Left cardiac atrium (tissue), 4 donors: ENCODE measurements at regions of chr19 and their contacts with region 1.

Region 1: DNA sequence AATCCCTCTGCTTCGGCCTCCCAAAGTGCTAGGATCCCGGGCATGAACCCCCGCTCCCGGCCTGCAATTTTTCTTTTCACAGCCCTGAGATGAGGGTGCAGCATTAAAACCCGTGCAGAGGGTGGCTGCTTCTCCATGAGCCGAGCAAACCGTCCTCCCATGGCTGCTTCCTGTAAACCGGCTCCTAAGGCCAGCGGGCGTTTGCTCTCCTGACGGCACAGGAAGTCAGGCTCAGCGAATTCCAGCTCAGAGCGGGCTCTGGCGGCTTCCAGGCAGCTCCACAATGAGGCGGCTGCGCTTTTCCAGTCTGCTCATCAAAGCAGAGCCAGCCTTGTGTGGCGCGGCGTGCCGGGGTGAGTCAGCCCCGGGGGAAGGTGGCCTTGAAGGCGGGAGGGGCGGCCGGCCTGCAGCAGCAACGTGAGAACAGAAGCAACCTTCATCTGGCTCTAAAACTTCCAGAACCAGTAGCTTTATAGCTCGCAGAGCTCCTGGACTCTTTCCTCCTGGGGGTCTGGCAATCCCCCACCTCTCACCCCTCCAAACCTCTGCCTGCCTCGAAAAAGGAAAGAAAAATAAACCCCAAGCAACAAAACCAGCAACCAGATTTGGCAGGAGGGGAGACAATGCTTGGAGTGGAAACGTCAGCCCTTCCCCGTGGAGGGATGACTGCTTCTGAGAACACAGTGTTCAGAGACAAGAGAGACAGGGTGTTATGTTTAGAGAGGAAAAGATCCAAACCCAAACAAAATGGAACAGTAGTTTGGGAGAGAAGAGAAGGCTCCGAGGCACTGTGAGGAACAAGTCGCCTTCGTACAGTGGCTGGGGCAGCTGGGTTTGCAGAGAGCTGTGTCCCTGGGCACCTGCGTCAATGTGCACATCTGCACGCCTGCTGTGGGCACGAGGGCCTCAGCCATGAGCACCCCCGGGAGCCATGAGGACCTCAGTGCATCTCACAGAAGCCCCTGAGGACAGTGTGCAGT is 67.8 kb downstream of the GADD45B start:
- DNase-seq: peak; percentile 97
- ATAC-seq: peak; percentile 81 to 90

Region 2: GRCh38 chr19:2475702-2476450 is 67.9 kb before region 1 on chr19 and contains the start of gene GADD45B:
- intact Hi-C with region 1: loop called (anchors 2 to 5 kb)
- DNase-seq: peak; percentile 98
- ATAC-seq: peak; percentile 81 to 84
- total RNA-seq, gene GADD45B: 64.0 to 189 TPM

Region 3: DNA sequence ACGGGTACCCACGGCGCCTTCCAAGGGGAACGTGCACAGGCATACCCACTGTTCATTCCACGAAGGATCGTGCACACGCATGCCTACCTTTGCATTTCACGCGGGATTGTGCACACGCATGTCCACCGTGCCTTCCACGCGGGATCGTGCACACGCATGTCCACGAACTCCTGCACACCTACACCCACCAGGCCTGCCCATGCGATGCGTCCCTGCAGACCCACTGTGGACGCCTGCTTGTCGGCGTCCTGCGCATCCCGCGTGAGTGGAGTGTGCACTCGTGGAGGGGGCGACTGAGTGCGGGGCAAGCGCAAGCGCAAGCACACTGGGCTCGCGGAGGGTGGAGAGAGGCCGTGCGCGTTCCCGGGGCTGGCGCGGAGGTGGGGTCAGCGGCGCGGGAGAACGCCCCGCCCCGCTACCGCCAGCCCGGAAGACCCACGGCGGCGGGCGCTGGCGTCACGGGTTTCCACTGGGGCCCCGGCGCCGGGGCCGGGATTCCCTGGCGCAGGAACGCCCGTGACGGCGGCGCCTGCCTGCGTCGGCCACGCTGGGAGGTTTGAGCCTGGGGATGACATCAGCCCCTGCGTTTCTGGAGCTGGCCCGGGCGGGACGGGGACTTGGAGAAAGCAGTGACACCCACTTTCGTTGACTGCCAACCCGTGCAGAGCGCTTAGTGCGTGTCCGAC is 49.2 kb before region 1 on chr19:
- intact Hi-C with region 1: loop called (anchors 5 kb)
- DNase-seq: peak; percentile 91
- ATAC-seq: peak; percentile 84 to 86

Region 4: DNA sequence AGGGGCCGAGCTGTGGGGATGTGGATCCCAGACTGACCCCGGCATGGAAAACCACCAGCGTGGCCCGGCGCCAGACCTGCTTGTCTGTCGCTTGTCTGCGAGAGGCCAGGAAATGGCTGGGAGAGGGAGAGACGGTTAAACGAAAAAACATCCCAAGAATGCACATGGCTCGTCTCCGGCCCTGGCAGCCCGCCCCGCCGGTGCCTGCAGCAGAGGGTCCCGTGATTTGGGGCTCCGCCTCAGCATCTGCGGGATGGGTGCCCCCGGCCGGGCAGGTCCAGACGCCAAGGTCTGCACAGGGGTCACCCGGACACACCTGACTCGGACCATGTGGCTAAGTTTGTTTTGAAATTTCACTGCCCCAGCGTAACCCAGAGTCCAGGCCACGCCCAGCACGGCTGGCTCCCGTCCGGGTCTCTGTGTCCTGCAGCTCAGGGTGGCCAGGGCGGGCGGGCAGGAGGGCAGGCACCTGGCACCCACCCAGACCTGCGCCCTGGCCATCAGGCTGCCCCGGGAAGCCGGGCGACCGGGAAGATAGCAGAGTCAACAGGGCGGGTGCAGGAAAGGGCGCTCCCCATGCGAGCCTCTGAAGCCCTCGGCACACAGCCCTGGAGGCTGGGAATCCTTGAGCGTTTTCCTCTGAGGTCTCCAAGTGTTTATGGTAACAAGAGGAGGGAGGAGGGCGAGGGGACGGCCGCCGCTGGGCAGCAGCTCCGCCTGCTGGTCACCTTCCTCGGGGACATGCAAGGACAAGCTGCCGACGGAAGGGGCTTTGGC is 35.3 kb after region 1 on chr19:
- intact Hi-C with region 1: loop called in 1 of 2 experiments (anchors 5 kb)
- DNase-seq: peak; percentile 89
- ATAC-seq: peak; percentile 87 to 89

Region 5: GRCh38 chr19:2602391-2603181 is 58.8 kb after region 1 on chr19:
- intact Hi-C with region 1: loop called in 1 of 2 experiments (anchors 2 kb)
- DNase-seq: peak; percentile 88
- ATAC-seq: peak; percentile 88 to 92

Region 6: GRCh38 chr19:2627319-2627829 is 83.6 kb after region 1 on chr19:
- intact Hi-C with region 1: no loop called
- DNase-seq: peak; percentile 85
- ATAC-seq: peak; percentile 67 to 89